ENCODE measurements at regions of chr1 and their contacts with region 1.

Region 1: GRCh38 chr1:10398734-10399623 is at the start of gene PGD:
- DNase-seq: peak; percentile 98
- H3K4me3 ChIP-seq: peak within 1 kb of the TSS; percentile 74 to 99 (median 74)
- H3K27ac ChIP-seq: peak within 1 kb of the TSS; percentile 80
- H3K4me1 ChIP-seq: peaks cover 15% of the 10 kb centered on the region
- H3K27me3 ChIP-seq: no peaks in the 10 kb centered on the region
- CTCF ChIP-seq: no peak
- total RNA-seq, gene PGD: 99.0 to 144 TPM

Region 2: GRCh38 chr1:10186331-10187025 is 212.5 kb before region 1 on chr1:
- CTCF ChIA-PET with region 1: no interaction called
- dilution Hi-C with region 1: no loop called
- in situ Hi-C with region 1: no loop called
- intact Hi-C with region 1: no loop called
- DNase-seq: no peak
- H3K4me3 ChIP-seq: no peak overlapping the region
- H3K27ac ChIP-seq: no peak overlapping the region
- H3K4me1 ChIP-seq: no peaks in the 10 kb centered on the region
- H3K27me3 ChIP-seq: no peaks in the 10 kb centered on the region
- CTCF ChIP-seq: no peak

Region 3: DNA sequence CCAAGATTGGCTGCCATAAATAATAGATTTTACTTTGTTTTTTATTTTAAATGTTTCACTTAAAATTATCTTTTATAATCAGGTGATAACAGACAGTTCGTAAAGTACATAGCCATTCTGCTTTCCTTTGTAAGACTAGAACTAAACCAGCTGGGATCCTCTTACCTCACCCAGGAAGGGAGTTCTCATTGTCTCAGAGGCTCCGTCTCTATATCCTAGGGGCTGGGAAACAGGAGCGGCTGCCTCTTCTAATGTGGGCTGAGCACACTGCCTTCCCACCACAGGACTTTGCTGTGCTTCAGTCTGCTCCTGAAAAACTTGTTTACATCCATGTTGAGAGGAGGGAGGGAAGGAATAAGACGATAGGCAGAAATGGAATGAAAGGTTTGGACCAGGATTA is 45.7 kb before region 1 on chr1:
- CTCF ChIA-PET with region 1: no interaction called
- dilution Hi-C with region 1: no loop called
- in situ Hi-C with region 1: no loop called
- intact Hi-C with region 1: no loop called
- DNase-seq: no peak
- H3K4me3 ChIP-seq: no peak overlapping the region
- H3K27ac ChIP-seq: no peak overlapping the region
- H3K4me1 ChIP-seq: no peaks in the 10 kb centered on the region
- H3K27me3 ChIP-seq: no peaks in the 10 kb centered on the region
- CTCF ChIP-seq: no peak

Region 4: GRCh38 chr1:10378081-10378841 is 20.7 kb before region 1 on chr1:
- CTCF ChIA-PET with region 1: no interaction called
- dilution Hi-C with region 1: no loop called
- in situ Hi-C with region 1: no loop called
- intact Hi-C with region 1: loop called (anchors 1 kb)
- DNase-seq: peak; percentile 14
- H3K4me3 ChIP-seq: no peak overlapping the region
- H3K27ac ChIP-seq: no peak overlapping the region
- H3K4me1 ChIP-seq: no peaks in the 10 kb centered on the region
- H3K27me3 ChIP-seq: no peaks in the 10 kb centered on the region
- CTCF ChIP-seq: no peak

Region 5: DNA sequence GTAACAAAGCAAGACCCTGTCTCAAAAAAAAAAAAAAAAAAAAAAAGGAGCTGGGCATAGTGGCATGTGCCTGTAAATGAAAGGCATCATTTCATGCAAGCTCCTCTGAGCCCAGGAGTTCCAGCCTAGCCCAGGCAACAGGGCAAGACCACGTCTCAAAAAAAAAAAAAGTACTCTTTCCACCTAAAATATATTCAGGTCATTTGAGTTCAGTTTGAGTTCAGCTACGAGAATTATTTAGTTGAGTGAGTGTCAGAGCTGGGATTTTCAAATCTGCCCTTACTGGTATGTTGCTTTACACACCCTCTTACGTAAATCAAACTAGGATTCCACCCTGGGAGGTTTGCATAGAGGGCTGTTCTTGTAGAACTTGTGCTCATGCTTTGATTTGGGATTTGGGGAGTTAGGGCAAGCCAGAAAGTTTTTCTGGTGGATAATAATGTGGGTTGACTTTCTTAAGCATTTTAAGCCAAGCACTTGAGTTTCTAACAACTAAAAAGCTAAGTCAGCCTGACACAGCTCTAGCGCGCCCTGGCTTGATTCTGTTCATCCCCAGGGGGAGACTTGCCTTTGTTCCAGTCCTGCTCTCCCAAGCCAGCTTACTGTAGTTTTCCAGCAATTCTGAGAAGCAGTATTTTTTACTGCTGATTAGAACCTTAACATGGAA is 11.4 kb before region 1 on chr1:
- CTCF ChIA-PET with region 1: no interaction called
- dilution Hi-C with region 1: no loop called
- in situ Hi-C with region 1: no loop called
- intact Hi-C with region 1: loop called (anchors 1 kb)
- DNase-seq: peak; percentile 41
- H3K4me3 ChIP-seq: no peak overlapping the region
- H3K27ac ChIP-seq: peak overlapping the region; percentile 17
- H3K4me1 ChIP-seq: peaks cover 11% of the 10 kb centered on the region
- H3K27me3 ChIP-seq: no peaks in the 10 kb centered on the region
- CTCF ChIP-seq: peak in 1 of 2 donors; percentile 5

Region 6: GRCh38 chr1:10415211-10415930 is 16.4 kb after region 1 on chr1:
- CTCF ChIA-PET with region 1: interaction called, 30 read pairs
- dilution Hi-C with region 1: no loop called
- in situ Hi-C with region 1: no loop called
- intact Hi-C with region 1: no loop called
- DNase-seq: no peak
- H3K4me3 ChIP-seq: no peak overlapping the region
- H3K27ac ChIP-seq: no peak overlapping the region
- H3K4me1 ChIP-seq: no peaks in the 10 kb centered on the region
- H3K27me3 ChIP-seq: no peaks in the 10 kb centered on the region
- CTCF ChIP-seq: no peak

Measured in mammary epithelial cell (primary cell).